ENCODE measurements at regions of chr11 and their contacts with region 1.

Region 1: DNA sequence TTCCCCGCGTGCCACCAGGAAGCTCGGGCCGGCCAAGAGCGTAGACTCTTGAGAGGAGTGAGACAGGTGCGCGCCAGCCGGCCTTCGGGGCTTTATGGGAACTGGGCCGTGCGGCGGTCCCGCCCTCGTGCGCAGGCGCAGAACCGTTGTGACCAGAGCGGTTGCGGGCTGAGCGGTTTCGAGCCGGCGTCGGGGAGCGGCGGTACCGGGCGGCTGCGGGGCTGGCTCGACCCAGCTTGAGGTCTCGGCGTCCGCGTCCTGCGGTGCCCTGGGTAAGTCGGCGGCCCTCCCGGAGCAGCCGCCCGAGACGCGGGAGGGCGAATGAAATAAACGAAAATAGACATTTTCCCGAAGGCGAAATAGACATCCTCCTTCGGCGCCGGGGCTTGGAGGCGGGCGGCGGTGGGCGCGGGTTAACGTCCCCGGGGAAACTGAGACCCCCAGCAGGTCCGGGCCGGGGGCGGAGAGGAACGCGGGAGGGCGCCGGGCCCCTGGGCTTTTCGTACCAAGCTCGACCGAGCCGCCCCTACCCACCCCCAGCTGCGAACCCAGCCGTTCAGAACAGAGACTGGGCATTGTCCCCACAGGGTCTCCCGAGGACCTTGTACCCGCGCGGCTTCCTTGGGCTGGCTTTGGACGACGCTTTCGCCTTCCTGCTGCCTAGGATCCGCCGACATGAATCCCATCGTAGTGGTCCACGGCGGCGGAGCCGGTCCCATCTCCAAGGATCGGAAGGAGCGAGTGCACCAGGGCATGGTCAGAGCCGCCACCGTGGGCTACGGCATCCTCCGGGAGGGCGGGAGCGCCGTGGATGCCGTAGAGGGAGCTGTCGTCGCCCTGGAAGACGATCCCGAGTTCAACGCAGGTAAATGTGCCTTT is at the start of gene ASRGL1:
- DNase-seq: peak; percentile 54 to 95
- H3K4me3 ChIP-seq: peak within 1 kb of the TSS; percentile 59 to 77 (median 72)
- H3K27ac ChIP-seq: no peak within 1 kb of the TSS
- H3K4me1 ChIP-seq: peaks cover 0 to 4% (median 0%) of the 10 kb centered on the region in 4 experiments; a peak in 4 of 7 replicates
- H3K27me3 ChIP-seq: peaks cover 0 to 10% (median 4%) of the 10 kb centered on the region in 4 experiments; a peak in 3 of 7 replicates
- CTCF ChIP-seq: peak in 1 of 3 experiments; percentile 4; a peak in 1 of 4 replicates
- EP300 ChIP-seq: no peak
- POLR2A ChIP-seq: peak in 1 of 2 experiments; percentile 42; a peak in 1 of 3 replicates
- RAD21 ChIP-seq: no peak
- total RNA-seq, gene ASRGL1: 23.5 and 27.2 TPM in 2 replicates

Region 2: GRCh38 chr11:62353844-62354243 is 16.3 kb after region 1 on chr11:
- CTCF ChIA-PET with region 1: interaction called, 25 read pairs
- POLR2A ChIA-PET with region 1: interaction called, 3 read pairs
- DNase-seq: no peak
- H3K4me3 ChIP-seq: no peak overlapping the region
- H3K27ac ChIP-seq: no peak overlapping the region
- H3K4me1 ChIP-seq: peaks cover 2 to 11% (median 6%) of the 10 kb centered on the region in 4 experiments; a peak in 4 of 7 replicates
- H3K27me3 ChIP-seq: no peaks in the 10 kb centered on the region
- CTCF ChIP-seq: no peak
- EP300 ChIP-seq: no peak
- POLR2A ChIP-seq: no peak
- RAD21 ChIP-seq: no peak

Region 3: DNA sequence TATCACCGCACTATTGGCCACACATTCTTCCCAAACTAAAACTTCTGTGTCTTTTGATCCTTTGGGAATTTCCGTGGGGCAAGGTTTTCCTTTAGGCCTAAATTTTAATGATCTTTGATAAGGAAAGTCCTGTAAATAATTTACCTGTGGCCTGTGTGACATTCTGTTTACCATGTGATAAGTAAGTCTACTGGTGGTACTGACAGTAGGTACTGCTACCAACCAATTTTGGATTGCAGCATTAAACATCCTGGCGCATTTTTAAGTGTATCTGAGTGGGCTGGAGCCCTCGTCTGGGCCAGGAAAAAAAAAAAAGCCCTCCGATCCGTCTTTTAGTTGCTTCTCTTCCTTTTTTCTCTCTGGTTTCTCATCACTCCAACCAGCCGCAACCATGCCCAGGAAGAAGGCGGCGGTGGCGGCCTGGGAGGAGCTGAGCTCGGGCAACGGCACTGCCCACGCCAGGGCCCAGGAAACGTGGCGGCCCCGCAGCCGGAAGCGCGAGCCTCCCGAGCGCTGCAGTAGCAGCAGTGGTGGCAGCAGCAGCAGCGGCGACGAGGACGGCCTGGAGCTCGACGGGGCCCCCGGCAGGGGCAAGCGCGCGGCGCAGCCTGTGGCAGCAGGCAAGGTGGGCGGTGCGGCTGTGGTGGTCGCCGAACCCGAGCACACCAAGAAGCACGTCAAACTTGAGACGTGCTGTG is 33.4 kb after region 1 on chr11:
- CTCF ChIA-PET with region 1: interaction called, 82 read pairs
- POLR2A ChIA-PET with region 1: interaction called, 3 read pairs
- DNase-seq: no peak
- H3K4me3 ChIP-seq: no peak overlapping the region
- H3K27ac ChIP-seq: no peak overlapping the region
- H3K4me1 ChIP-seq: no peaks in the 10 kb centered on the region
- H3K27me3 ChIP-seq: no peaks in the 10 kb centered on the region
- CTCF ChIP-seq: peak; percentile 23 to 39 (median 24); a peak in 3 of 4 replicates
- EP300 ChIP-seq: no peak
- POLR2A ChIP-seq: no peak
- RAD21 ChIP-seq: no peak; a peak in 1 of 4 replicates

Region 4: GRCh38 chr11:62383822-62384221 is 46.3 kb after region 1 on chr11:
- CTCF ChIA-PET with region 1: interaction called, 13 read pairs
- POLR2A ChIA-PET with region 1: no interaction called
- DNase-seq: no peak
- H3K4me3 ChIP-seq: no peak overlapping the region
- H3K27ac ChIP-seq: no peak overlapping the region
- H3K4me1 ChIP-seq: no peaks in the 10 kb centered on the region
- H3K27me3 ChIP-seq: no peaks in the 10 kb centered on the region
- CTCF ChIP-seq: no peak
- EP300 ChIP-seq: no peak
- POLR2A ChIP-seq: no peak
- RAD21 ChIP-seq: no peak

Region 5: DNA sequence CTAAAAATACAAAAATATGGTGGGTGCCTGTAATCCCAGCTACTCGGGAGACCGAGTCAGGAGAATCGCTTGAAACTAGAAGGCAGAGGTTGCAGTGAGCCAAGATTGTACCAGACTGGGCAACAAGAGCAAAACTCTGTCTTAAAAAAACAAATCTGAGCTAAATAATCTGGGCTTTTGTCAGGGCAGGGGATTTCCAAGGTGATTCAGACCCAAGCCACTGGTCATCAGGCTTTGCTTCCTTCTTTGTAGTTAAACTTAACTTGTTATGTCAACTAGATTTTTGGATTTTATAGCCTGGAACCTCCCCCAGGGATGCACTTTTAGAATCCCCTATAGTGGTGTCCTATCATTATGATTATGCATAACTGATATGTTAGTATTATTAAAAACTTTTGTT is 705.1 kb after region 1 on chr11:
- CTCF ChIA-PET with region 1: no interaction called
- POLR2A ChIA-PET with region 1: no interaction called
- DNase-seq: no peak
- H3K4me3 ChIP-seq: no peak overlapping the region
- H3K27ac ChIP-seq: no peak overlapping the region
- H3K4me1 ChIP-seq: no peaks in the 10 kb centered on the region
- H3K27me3 ChIP-seq: no peaks in the 10 kb centered on the region
- CTCF ChIP-seq: no peak
- EP300 ChIP-seq: no peak
- POLR2A ChIP-seq: no peak
- RAD21 ChIP-seq: no peak